ENCODE measurements at regions of chr13 and their contacts with region 1.

Region 1: DNA sequence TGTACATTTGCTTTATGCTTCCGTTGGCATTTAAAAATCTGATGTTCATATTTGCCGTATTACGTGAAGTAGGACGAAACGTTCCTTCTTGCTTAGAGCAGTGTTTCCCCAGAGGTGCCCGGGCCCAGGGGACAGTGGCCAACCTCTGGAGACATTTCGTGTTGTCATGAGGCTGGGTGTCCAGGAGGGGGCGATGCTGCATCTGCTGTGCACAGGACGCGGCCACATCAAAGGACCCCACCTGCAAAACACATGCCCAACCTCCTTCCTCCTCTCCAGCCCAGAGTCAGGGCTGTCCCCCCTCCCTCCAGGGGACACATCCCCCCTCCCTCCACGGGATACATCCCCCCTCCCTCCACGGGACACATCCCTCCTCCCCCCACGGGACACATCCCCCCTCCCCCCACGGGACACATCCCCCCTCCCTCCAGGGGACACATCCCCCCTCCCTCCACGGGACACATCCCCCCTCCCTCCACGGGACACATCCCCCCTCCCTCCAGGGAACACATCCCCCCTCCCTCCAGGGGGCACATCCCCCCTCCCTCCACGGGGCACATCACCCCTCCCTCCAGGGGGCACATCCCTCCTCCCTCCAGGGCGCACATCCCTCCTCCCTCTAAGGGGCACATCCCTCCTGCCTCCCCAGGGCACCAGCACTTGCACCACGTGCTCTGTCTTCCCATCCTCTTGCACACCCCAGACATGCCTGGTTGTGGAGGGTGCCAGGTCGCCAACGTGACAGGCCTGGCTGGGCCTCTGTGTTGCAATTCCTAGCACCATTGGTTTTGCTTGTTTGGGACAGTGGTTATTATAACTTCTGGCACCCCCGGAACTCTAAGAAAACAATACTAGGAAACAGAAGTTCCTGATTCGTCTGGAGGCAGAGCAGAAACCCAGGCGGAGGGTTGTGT is 46.7 kb downstream of the GAS6 start:
- DNase-seq: peak; percentile 91
- H3K4me3 ChIP-seq: no peak overlapping the region
- H3K27ac ChIP-seq: peak overlapping the region; percentile 34
- H3K4me1 ChIP-seq: peaks cover 6% of the 10 kb centered on the region
- H3K27me3 ChIP-seq: no peaks in the 10 kb centered on the region
- CTCF ChIP-seq: peak; percentile 70 to 93
- POLR2A ChIP-seq: no peak

Region 2: DNA sequence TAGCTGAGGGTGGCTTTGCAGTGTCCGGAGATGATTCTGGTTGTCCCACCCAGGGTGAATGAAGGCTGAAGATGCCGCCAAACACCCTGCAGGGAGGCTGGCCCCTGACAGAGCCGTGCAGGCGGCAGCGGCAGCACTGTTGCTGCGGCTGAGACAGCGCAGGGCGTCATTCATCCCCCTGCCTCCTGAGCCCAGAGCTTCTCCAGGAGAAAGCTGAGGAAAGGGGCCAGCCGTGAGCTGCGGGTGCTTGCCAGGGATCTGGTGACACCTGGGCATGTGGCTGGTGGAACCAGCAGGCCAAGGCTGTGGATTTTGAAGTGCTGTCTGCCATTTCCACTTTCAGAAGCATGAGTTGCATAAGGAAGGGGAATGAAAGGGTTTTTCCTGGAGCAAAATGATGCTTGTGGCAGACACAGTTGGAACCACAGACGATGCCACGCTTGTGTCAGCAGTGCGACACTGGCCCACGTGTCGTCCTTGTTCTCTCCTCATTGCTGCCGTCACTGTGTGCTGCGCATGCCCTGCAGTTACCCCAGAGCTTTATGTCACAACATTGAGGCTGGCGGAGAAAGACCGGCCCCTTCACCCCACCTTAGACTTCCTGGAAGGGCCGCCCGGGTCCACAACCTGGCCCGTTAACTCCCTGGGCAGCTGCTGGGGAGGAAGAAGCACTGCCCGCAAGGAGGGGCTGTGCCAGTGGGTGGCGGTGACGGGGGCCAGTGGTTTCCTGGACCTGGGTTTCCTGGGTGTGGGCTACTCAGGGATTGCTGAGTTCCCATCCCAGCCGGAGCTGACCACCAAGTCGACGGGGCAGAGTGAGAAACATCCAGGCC is 209.9 kb before region 1 on chr13:
- CTCF ChIA-PET with region 1: no interaction called
- POLR2A ChIA-PET with region 1: no interaction called
- dilution Hi-C with region 1: no loop called
- intact Hi-C with region 1: no loop called
- DNase-seq: no peak
- H3K4me3 ChIP-seq: no peak overlapping the region
- H3K27ac ChIP-seq: no peak overlapping the region
- H3K4me1 ChIP-seq: no peaks in the 10 kb centered on the region
- H3K27me3 ChIP-seq: no peaks in the 10 kb centered on the region
- CTCF ChIP-seq: no peak
- POLR2A ChIP-seq: no peak

Region 3: GRCh38 chr13:113758651-113759524 is 58.3 kb before region 1 on chr13 and contains the start of gene TMEM255B:
- CTCF ChIA-PET with region 1: no interaction called
- POLR2A ChIA-PET with region 1: no interaction called
- dilution Hi-C with region 1: no loop called
- intact Hi-C with region 1: loop called (anchors 1 kb)
- DNase-seq: peak; percentile 81
- H3K4me3 ChIP-seq: peak within 1 kb of the TSS; percentile 80 to 93 (median 91)
- H3K27ac ChIP-seq: peak within 1 kb of the TSS; percentile 87
- H3K4me1 ChIP-seq: peaks cover 18% of the 10 kb centered on the region
- H3K27me3 ChIP-seq: no peaks in the 10 kb centered on the region
- CTCF ChIP-seq: peak in 1 of 2 donors; percentile 28
- POLR2A ChIP-seq: peak; percentile 78
- total RNA-seq, gene TMEM255B: 85.0 and 105 TPM in 2 replicates

Region 4: DNA sequence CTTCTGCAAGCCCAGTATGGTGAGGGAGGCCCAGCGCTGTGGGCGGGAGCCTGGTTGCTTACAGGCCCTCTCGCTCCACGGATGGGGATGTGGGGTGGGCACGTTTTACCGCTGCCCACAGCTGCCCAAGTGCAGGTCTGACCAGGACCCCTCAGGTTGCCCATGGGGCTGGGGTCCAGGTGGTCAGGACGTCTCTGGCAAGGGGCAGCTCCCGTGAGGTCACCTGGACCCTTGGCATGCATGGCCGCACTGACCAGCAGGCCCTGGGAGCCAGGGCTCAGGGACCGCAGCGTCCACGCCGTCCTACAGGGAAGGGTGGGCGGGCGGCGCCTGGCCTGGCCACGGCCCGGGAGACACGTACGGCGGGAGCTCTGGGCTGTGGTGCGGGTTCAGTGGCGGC is 13.9 kb after region 1 on chr13:
- CTCF ChIA-PET with region 1: no interaction called
- POLR2A ChIA-PET with region 1: no interaction called
- dilution Hi-C with region 1: no loop called
- intact Hi-C with region 1: no loop called
- DNase-seq: no peak
- H3K4me3 ChIP-seq: no peak overlapping the region
- H3K27ac ChIP-seq: no peak overlapping the region
- H3K4me1 ChIP-seq: no peaks in the 10 kb centered on the region
- H3K27me3 ChIP-seq: no peaks in the 10 kb centered on the region
- CTCF ChIP-seq: no peak
- POLR2A ChIP-seq: no peak

Region 5: GRCh38 chr13:113848431-113849260 is 31.4 kb after region 1 on chr13:
- CTCF ChIA-PET with region 1: no interaction called
- POLR2A ChIA-PET with region 1: no interaction called
- dilution Hi-C with region 1: no loop called
- intact Hi-C with region 1: no loop called
- DNase-seq: no peak
- H3K4me3 ChIP-seq: no peak overlapping the region
- H3K27ac ChIP-seq: no peak overlapping the region
- H3K4me1 ChIP-seq: no peaks in the 10 kb centered on the region
- H3K27me3 ChIP-seq: no peaks in the 10 kb centered on the region
- CTCF ChIP-seq: no peak
- POLR2A ChIP-seq: no peak

Region 6: GRCh38 chr13:113863436-113864272 is 46.5 kb after region 1 on chr13 and contains the start of gene GAS6:
- CTCF ChIA-PET with region 1: interaction called, 3 read pairs
- POLR2A ChIA-PET with region 1: no interaction called
- dilution Hi-C with region 1: no loop called
- intact Hi-C with region 1: loop called (anchors 1 kb)
- DNase-seq: peak; percentile 53
- H3K4me3 ChIP-seq: peak within 1 kb of the TSS; percentile 52 to 65 (median 56)
- H3K27ac ChIP-seq: no peak within 1 kb of the TSS
- H3K4me1 ChIP-seq: peaks cover 11% of the 10 kb centered on the region
- H3K27me3 ChIP-seq: peaks cover 17 to 27% of the 10 kb centered on the region in 2 experiments
- CTCF ChIP-seq: peak in 1 of 2 donors; percentile 19
- POLR2A ChIP-seq: no peak
- total RNA-seq, gene GAS6: 69.2 and 84.4 TPM in 2 replicates

Region 7: DNA sequence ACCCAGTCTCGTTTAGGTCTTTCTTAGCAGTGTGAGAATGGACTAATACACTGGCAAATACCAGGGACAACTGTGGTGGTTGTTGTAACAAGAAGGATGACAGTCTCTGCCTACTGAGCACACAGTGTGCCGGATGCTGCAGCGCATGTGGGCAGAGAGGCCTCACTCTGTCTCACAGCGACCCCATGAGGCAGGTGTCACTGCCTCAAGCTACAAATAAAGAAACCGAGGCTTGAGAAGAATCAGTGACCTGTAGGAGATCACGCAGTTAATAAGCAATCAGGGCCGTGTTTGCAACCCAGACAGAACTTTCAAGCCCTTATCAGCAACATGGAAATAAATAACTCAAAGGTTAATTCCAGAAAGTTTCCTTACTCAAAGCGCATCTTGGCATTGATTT is 87.2 kb after region 1 on chr13:
- CTCF ChIA-PET with region 1: interaction called, 21 read pairs
- POLR2A ChIA-PET with region 1: no interaction called
- dilution Hi-C with region 1: no loop called
- intact Hi-C with region 1: loop called (anchors 2 kb)
- DNase-seq: peak; percentile 62
- H3K4me3 ChIP-seq: no peak overlapping the region
- H3K27ac ChIP-seq: no peak overlapping the region
- H3K4me1 ChIP-seq: no peaks in the 10 kb centered on the region
- H3K27me3 ChIP-seq: peaks cover 0 to 9% of the 10 kb centered on the region in 2 experiments
- CTCF ChIP-seq: peak; percentile 59 to 66
- POLR2A ChIP-seq: no peak

Region 8: DNA sequence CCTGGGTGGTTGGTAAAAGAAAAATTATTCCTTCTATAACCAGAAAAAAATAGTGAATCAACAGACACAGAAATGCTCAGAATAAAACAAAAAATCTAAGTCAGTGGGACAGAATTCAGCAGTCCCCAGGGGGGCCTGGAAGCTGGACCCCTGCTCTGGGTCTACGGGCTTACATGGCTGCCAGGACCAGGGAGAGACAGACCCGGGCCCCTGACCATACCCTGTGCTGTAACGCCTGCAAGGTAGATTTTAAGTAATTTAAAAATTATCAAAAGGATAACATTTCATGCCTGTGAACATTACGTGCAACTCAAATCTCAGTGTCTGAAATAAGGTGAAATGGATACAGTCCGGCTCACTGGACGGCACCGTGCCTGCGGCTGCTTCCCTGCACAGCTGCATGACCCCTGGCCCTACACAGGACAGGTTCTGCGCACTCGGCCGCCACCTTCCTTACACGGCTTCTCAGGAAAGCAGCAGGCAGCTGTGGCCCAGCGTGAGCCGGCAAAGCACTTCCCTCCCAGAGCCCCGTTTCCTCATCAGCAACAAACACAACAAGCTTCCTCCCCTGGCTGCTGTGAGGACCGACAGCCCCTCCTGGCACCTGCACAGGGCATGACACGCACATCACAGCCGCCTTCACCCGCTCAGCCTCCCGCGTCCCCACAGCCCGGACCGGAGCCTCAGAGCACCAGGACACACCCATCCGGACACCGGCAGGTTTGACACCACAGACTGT is 293.1 kb after region 1 on chr13:
- CTCF ChIA-PET with region 1: no interaction called
- POLR2A ChIA-PET with region 1: no interaction called
- dilution Hi-C with region 1: no loop called
- intact Hi-C with region 1: loop called (anchors 5 kb)
- DNase-seq: peak; percentile 81
- H3K4me3 ChIP-seq: no peak overlapping the region
- H3K27ac ChIP-seq: peak overlapping the region; percentile 44
- H3K4me1 ChIP-seq: peaks cover 37% of the 10 kb centered on the region
- H3K27me3 ChIP-seq: no peaks in the 10 kb centered on the region
- CTCF ChIP-seq: peak; percentile 38 to 58
- POLR2A ChIP-seq: no peak